Aorta (tissue), 5 donors: ENCODE measurements at regions of chr5 and their contacts with region 1.

Region 1: DNA sequence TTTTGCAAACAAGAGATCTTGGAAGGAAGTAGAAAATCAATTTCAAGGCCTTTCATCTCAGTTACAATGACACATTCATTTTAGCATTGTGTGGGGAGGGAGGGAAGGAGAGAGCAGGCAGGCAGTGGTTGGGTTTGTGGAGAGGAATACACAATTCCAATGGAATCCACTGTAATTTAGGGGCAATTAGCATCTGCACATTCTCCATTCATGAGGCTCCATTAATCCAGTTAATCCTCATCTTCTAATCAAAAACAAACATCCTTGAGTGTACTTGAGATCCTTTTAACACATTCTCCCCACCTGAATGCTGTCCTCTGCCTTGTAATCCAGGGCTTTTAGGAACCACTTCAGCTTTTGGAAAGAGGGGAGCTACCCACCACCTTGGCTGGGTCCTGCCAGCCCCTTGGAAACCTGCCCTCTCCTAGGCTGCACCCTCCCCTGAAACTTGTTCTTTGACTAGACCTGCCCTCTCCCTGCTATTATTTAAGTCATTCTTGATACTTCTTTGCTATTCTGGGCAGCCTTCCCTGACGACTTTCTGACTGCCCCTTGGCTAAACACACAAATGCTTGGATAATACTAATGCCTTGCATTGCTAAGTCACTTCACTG is 271.2 kb downstream of the SLIT3 start:
- DNase-seq: peak in 1 of 2 donors; percentile 49
- ATAC-seq: peak; percentile 64
- H3K4me3 ChIP-seq: no peak overlapping the region
- H3K27ac ChIP-seq: peak overlapping the region; percentile 39 to 92
- H3K4me1 ChIP-seq: peaks cover 6 to 8% of the 10 kb centered on the region in 2 donors
- H3K27me3 ChIP-seq: no peaks in the 10 kb centered on the region

Region 2: DNA sequence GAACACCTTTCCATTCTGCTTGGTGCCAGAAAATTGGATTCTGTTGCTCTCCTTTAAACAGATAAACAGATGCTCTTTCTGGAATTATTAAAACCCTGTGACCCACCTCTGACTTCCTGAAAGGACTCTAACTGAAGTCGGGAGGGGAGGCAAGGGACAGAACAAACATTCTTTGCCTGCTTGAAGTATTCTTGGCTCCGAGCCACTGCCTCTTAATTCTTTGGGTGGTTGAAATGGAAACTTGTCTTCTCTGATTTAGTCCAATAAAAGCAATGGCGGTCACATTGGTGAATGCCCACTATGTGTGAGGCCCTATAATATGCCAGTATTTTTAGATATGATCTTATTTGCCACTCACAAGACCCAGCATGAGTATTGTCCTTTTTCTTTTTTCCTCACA is 34.3 kb after region 1 on chr5:
- intact Hi-C with region 1: loop called in 1 of 2 experiments (anchors 5 kb)
- DNase-seq: peak in 1 of 2 donors; percentile 55
- ATAC-seq: peak; percentile 28
- H3K4me3 ChIP-seq: no peak overlapping the region
- H3K27ac ChIP-seq: no peak overlapping the region
- H3K4me1 ChIP-seq: peaks cover 10 to 17% of the 10 kb centered on the region in 2 donors
- H3K27me3 ChIP-seq: no peaks in the 10 kb centered on the region